CD8-positive, alpha-beta memory T cell (primary cell): ENCODE measurements at regions of chrX and their contacts with region 1.

Region 1: DNA sequence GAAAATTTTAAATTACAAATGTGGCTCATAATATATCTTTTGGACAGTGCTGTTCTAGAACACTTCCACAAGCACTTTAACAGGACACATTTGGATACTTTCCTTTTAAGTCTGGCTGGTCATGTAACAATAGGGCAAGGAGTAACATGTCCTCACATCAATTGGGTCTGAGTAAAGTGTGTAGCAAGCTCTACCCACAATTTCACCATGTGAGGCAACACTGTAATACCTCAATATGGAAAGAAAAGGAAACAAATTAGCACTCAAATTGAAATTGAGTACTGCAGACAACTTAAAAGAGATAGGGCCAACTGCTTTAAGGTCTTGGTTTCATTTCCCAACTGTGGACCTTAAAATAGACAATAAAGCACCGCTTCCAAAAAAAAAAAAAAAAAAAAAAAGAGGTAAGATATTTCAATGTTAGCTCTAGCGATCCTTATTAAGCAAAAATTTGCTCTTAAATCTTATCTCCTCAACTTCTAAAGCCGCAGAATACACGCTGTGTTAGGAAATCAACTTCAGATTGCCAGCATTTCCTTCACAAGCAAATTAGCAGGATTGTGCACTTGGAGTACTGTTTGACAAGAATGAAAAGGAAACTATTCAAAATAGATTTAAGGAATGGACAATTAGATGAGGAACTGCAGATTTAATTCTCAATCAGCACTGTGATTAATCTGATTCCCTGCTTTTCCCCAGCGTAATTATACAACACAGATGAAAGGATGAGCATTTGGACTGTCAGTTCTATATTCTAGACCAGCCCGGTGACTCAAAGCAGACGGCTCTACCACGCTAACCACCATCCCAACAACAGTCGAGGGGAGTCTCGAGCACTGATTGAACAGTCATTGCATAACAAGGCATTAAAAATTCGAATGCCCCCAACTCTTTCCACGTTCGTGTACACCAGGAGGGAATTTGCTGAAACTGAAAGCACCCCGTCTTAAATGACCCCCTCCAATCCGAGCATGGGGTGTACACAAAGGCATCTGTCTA is 1.6 kb downstream of the CASK start:
- DNase-seq: peak in 4 of 5 donors; percentile 1 to 50 (median 12)
- H3K4me3 ChIP-seq: peak overlapping the region; percentile 75
- H3K4me3 Mint-ChIP-seq: peak overlapping the region; percentile 87 to 99 (median 92)
- H3K27ac ChIP-seq: peak overlapping the region; percentile 12
- H3K27ac Mint-ChIP-seq: peak overlapping the region; percentile 50 to 91 (median 88)
- H3K4me1 ChIP-seq: no peaks in the 10 kb centered on the region
- H3K4me1 Mint-ChIP-seq: peaks cover 38 to 51% (median 46%) of the 10 kb centered on the region in 3 donors
- H3K27me3 ChIP-seq: no peaks in the 10 kb centered on the region
- H3K27me3 Mint-ChIP-seq: peaks cover 0 to 2% of the 10 kb centered on the region in 2 donors

Region 2: DNA sequence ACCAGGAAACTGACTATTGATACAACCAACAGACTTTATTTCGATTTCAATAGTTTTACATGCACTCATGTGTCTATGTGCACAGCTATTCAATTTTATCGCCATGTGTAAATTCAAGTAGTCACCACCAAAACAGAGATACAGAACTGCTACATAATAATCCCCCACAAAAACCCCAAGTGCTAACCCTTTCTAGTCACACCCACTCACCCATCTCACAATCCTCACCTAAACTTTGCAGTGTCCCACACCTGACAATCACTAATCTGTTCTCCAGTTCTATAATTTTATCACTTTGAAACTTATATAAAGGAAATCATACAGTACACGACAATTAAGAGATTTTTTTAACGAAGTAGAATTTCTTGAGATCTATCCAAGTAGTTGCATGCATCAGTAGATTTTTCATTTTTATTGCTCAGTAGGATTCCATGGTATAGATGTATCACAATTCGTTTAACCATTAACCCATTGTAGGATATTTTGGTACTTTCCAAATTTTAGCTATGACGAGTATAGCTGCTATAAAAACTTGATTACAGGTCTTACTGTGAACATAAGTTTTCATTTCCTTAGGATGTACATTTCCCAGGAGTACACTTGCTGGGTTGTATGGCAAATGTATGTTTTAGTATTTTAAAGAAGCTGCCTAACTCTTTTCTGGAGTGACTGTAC is 84.4 kb before region 1 on chrX:
- CTCF ChIA-PET with region 1: no interaction called
- POLR2A ChIA-PET with region 1: interaction called, 14 read pairs
- DNase-seq: no peak
- H3K4me3 ChIP-seq: no peak overlapping the region
- H3K4me3 Mint-ChIP-seq: peak overlapping the region in 4 of 7 donors; percentile 6 to 38 (median 21)
- H3K27ac ChIP-seq: no peak overlapping the region
- H3K27ac Mint-ChIP-seq: peak overlapping the region in 4 of 8 donors; percentile 1 to 66 (median 32)
- H3K4me1 ChIP-seq: no peaks in the 10 kb centered on the region
- H3K4me1 Mint-ChIP-seq: peaks cover 20 to 43% (median 27%) of the 10 kb centered on the region in 3 donors
- H3K27me3 ChIP-seq: no peaks in the 10 kb centered on the region
- H3K27me3 Mint-ChIP-seq: peaks cover 0 to 2% of the 10 kb centered on the region in 2 donors